ENCODE measurements at regions of chr3 and their contacts with region 1.

Region 1: DNA sequence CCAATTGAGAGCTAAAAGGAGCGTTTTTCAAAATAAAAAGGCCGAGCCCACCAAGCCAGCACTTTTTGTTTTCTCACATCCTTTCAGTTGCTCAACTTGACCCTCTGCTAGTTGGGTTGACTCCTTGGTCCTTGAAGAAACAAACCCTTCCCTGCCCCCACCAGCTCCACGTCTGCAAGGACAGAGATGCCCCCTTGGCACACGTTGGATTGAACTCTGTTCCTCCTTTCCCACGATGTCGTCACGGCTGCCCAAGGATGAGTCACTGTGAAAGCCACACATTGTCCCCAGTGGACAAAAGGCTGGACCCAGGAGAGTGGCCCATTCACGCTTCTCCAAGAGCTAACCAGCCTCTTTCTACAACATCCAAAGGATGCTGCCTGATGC is 43.0 kb upstream of the SPATA12 start:
- DNase-seq: no peak
- H3K4me3 ChIP-seq: no peak overlapping the region
- CTCF ChIP-seq: no peak

Region 2: GRCh38 chr3:56970461-56970879 is 47.0 kb before region 1 on chr3:
- in situ Hi-C with region 1: no loop called
- DNase-seq: no peak
- H3K4me3 ChIP-seq: no peak overlapping the region
- CTCF ChIP-seq: no peak

Region 3: DNA sequence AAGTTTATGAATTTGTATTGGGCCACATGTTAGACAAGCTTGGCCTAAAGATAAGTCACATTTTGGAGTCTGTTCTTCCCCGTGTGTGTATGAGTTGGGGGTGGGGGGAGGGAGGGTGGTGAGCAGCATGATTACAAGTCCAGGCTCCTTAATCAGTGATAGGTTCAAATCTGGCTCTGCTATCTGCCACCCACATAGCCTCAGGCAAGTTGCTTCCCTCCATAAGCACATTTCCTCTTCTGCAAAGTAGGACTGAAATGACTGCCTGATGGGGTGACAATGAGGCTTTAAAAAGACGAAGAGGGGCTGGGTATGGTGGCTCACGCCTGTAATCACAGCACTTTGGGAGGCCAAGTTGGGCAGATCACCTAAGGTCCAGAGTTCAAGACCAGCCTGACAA is 42.0 kb after region 1 on chr3:
- in situ Hi-C with region 1: loop called (anchors 5 kb)
- DNase-seq: no peak
- H3K4me3 ChIP-seq: no peak overlapping the region
- CTCF ChIP-seq: no peak

Measured in astrocyte of the cerebellum (primary cell).